ENCODE measurements at regions of chr10 and their contacts with region 1.

Region 1: DNA sequence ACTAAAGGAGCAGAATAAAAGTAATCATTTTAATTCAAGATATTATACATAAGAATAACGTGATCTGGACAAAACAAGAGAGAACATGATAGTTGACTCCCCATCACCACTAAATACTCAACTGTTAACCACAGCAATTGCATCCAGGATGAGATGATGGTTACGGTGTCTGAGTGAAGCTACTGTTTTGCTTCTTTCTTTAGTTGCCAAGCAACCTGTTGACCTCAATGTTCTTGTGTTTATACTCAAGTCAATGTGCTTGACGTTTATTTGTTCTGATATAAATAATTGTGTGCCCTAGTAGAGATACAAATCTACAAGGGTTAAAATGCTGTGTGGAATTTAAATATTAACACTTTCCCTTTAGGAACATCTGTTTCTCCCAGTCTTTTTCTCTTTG is 31.4 kb upstream of the MPP7 start:
- DNase-seq: peak in 8 of 9 donors; percentile 32 to 95 (median 91)
- ATAC-seq: peak; percentile 83
- H3K4me3 ChIP-seq: peak overlapping the region; percentile 62
- H3K4me3 Mint-ChIP-seq: peak overlapping the region; percentile 72 to 97 (median 91)
- H3K27ac ChIP-seq: peak overlapping the region; percentile 98
- H3K27ac Mint-ChIP-seq: peak overlapping the region; percentile 96 to 100 (median 99)
- H3K4me1 ChIP-seq: peaks cover 33 to 56% of the 10 kb centered on the region in 2 donors
- H3K4me1 Mint-ChIP-seq: peaks cover 44 to 88% (median 71%) of the 10 kb centered on the region in 7 donors
- H3K27me3 ChIP-seq: no peaks in the 10 kb centered on the region
- H3K27me3 Mint-ChIP-seq: peaks cover 0 to 9% (median 0%) of the 10 kb centered on the region in 5 donors

Region 2: DNA sequence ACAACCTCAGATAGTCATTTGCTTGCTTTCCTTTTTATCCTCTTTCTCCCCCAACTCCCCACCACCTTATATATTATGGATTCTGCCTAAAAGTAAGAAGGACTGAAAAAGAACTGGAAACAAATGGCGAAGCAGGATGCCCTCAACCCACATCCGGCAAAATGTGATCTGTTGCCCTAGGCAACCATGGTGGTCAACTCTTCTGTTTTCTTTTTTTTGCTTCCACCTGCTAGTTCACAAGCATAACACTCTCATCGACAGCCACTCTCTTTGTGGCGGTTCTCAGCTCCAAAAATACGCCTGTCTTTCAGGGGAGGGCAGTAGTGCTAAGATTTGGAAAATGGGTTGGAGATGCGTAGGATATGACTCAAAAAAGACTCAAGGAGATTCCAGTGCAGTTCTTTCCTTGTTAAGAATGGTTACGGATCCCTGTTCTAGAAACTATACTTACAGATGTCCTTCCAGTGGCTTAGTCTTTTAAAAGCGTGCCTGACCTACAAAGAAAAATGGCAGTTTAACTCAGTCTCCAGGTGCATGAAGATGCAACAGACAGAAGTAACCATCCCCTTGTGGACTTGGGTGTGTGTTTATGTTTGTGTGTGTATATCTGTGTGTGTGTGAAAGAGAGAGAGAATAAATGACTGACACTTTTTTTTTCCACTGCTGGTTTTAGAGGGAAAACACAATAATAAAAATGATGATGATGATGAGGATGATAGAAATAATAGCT is 1885.4 kb before region 1 on chr10:
- CTCF ChIA-PET with region 1: no interaction called
- POLR2A ChIA-PET with region 1: interaction called, 3 read pairs
- intact Hi-C with region 1: loop called in 1 of 2 experiments (anchors 10 kb)
- DNase-seq: peak; percentile 23 to 91 (median 89)
- ATAC-seq: peak; percentile 89
- H3K4me3 ChIP-seq: peak overlapping the region; percentile 31
- H3K4me3 Mint-ChIP-seq: peak overlapping the region; percentile 71 to 92 (median 84)
- H3K27ac ChIP-seq: peak overlapping the region; percentile 76
- H3K27ac Mint-ChIP-seq: peak overlapping the region; percentile 93 to 99 (median 97)
- H3K4me1 ChIP-seq: peaks cover 57 to 70% of the 10 kb centered on the region in 2 donors
- H3K4me1 Mint-ChIP-seq: peaks cover 60 to 97% (median 90%) of the 10 kb centered on the region in 7 donors
- H3K27me3 ChIP-seq: no peaks in the 10 kb centered on the region
- H3K27me3 Mint-ChIP-seq: no peaks in the 10 kb centered on the region

Region 3: GRCh38 chr10:26682931-26683330 is 1651.4 kb before region 1 on chr10:
- CTCF ChIA-PET with region 1: interaction called, 3 read pairs
- POLR2A ChIA-PET with region 1: no interaction called
- intact Hi-C with region 1: loop called in 1 of 2 experiments (anchors 10 kb)
- DNase-seq: peak in 7 of 9 donors; percentile 65 to 91 (median 85)
- ATAC-seq: peak; percentile 91
- H3K4me3 ChIP-seq: no peak overlapping the region
- H3K4me3 Mint-ChIP-seq: peak overlapping the region in 9 of 10 donors; percentile 26 to 83 (median 71)
- H3K27ac ChIP-seq: peak overlapping the region; percentile 69
- H3K27ac Mint-ChIP-seq: peak overlapping the region in 8 of 9 donors; percentile 94 to 99 (median 97)
- H3K4me1 ChIP-seq: peaks cover 0 to 33% of the 10 kb centered on the region in 2 donors
- H3K4me1 Mint-ChIP-seq: peaks cover 14 to 63% (median 39%) of the 10 kb centered on the region in 7 donors
- H3K27me3 ChIP-seq: no peaks in the 10 kb centered on the region
- H3K27me3 Mint-ChIP-seq: peaks cover 0 to 9% (median 0%) of the 10 kb centered on the region in 5 donors

Region 4: DNA sequence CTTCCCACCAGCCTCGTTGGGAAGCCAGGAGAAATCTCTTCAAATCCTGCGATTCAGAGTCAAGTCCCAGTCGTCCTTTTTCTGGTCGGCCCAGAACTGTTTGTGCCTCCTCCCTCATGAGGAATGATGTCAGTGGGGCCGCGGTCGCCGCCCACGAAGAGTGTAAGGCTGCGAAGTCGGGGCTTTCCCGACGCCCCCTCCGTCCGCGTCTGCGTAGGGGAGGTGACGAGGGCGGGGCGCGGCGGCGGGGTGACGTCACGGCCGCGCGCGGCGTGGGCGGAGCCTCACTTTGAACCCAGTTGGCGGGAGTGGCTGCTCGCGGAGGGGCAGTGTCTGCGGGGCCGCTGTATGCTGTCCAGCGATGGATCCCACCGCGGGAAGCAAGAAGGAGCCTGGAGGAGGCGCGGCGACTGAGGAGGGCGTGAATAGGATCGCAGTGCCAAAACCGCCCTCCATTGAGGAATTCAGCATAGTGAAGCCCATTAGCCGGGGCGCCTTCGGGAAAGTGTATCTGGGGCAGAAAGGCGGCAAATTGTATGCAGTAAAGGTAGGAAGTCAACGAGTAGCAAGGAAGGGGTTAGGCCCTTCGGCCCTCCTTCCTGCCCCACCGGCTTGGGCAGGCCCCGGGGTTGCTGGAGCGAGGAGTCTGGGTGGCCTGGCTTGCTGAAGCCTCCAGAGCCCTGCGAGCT is 1179.1 kb before region 1 on chr10 and contains the start of gene MASTL:
- CTCF ChIA-PET with region 1: no interaction called
- POLR2A ChIA-PET with region 1: no interaction called
- intact Hi-C with region 1: loop called in 1 of 2 experiments (anchors 1 kb)
- DNase-seq: peak; percentile 93 to 97 (median 96)
- ATAC-seq: peak; percentile 89
- H3K4me3 ChIP-seq: peak within 1 kb of the TSS; percentile 90
- H3K4me3 Mint-ChIP-seq: peak within 1 kb of the TSS; percentile 91 to 100 (median 99)
- H3K27ac ChIP-seq: peak within 1 kb of the TSS; percentile 99
- H3K27ac Mint-ChIP-seq: peak within 1 kb of the TSS; percentile 100
- H3K4me1 ChIP-seq: peaks cover 13 to 17% of the 10 kb centered on the region in 2 donors
- H3K4me1 Mint-ChIP-seq: peaks cover 34 to 60% (median 50%) of the 10 kb centered on the region in 7 donors
- H3K27me3 ChIP-seq: no peaks in the 10 kb centered on the region
- H3K27me3 Mint-ChIP-seq: peaks cover 0 to 2% (median 0%) of the 10 kb centered on the region in 5 donors
- total RNA-seq, gene MASTL: 8.4 to 29.0 (median 20.2) TPM

Region 5: GRCh38 chr10:27661514-27662286 is 672.6 kb before region 1 on chr10:
- CTCF ChIA-PET with region 1: no interaction called
- POLR2A ChIA-PET with region 1: no interaction called
- intact Hi-C with region 1: no loop called
- DNase-seq: no peak
- ATAC-seq: no peak
- H3K4me3 ChIP-seq: no peak overlapping the region
- H3K4me3 Mint-ChIP-seq: no peak overlapping the region
- H3K27ac ChIP-seq: no peak overlapping the region
- H3K27ac Mint-ChIP-seq: no peak overlapping the region
- H3K4me1 ChIP-seq: no peaks in the 10 kb centered on the region
- H3K4me1 Mint-ChIP-seq: peaks cover 0 to 7% (median 0%) of the 10 kb centered on the region in 7 donors
- H3K27me3 ChIP-seq: peaks cover 0 to 4% of the 10 kb centered on the region in 2 donors
- H3K27me3 Mint-ChIP-seq: peaks cover 31 to 53% (median 39%) of the 10 kb centered on the region in 5 donors

Region 6: DNA sequence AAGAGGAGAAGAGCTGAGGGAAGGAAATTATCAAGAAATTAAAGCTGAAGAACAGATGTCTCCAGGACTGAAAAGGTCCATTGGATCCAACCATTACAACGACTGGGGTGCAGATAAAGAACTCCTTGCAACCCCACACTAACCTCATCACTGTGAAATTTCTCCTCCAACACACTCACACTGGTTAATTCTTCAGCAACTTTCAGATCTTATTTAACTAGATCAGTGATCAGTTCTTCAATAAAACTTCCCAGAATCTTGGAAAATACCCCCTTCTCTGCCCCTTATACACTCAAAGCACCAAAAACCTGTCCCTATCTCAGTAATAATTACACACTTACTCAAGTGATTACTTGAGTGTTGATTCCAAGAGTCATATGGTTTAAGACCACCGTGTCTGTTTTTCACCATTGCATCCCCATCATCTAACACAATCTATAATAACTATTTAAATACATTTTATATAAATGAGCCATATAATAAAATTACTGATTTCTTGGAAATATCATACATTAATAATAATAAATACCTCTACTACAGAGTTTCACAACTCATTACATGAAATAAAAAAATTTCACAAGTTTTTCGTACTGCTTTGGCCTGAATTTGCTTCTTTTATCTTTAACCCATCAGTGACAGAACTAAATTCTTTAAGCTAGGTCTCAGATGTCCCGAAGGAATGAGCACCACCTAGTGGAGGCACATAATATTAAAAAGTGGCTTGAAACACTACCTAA is 155.1 kb before region 1 on chr10:
- CTCF ChIA-PET with region 1: interaction called, 3 read pairs
- POLR2A ChIA-PET with region 1: no interaction called
- intact Hi-C with region 1: loop called in 1 of 2 experiments (anchors 2 kb)
- DNase-seq: peak in 7 of 9 donors; percentile 18 to 63 (median 49)
- ATAC-seq: peak; percentile 86
- H3K4me3 ChIP-seq: peak overlapping the region; percentile 55
- H3K4me3 Mint-ChIP-seq: peak overlapping the region; percentile 0 to 98 (median 87)
- H3K27ac ChIP-seq: peak overlapping the region; percentile 54
- H3K27ac Mint-ChIP-seq: peak overlapping the region; percentile 77 to 98 (median 92)
- H3K4me1 ChIP-seq: peaks cover 10 to 12% of the 10 kb centered on the region in 2 donors
- H3K4me1 Mint-ChIP-seq: peaks cover 17 to 70% (median 55%) of the 10 kb centered on the region in 7 donors
- H3K27me3 ChIP-seq: no peaks in the 10 kb centered on the region
- H3K27me3 Mint-ChIP-seq: peaks cover 0 to 9% (median 0%) of the 10 kb centered on the region in 5 donors

Region 7: DNA sequence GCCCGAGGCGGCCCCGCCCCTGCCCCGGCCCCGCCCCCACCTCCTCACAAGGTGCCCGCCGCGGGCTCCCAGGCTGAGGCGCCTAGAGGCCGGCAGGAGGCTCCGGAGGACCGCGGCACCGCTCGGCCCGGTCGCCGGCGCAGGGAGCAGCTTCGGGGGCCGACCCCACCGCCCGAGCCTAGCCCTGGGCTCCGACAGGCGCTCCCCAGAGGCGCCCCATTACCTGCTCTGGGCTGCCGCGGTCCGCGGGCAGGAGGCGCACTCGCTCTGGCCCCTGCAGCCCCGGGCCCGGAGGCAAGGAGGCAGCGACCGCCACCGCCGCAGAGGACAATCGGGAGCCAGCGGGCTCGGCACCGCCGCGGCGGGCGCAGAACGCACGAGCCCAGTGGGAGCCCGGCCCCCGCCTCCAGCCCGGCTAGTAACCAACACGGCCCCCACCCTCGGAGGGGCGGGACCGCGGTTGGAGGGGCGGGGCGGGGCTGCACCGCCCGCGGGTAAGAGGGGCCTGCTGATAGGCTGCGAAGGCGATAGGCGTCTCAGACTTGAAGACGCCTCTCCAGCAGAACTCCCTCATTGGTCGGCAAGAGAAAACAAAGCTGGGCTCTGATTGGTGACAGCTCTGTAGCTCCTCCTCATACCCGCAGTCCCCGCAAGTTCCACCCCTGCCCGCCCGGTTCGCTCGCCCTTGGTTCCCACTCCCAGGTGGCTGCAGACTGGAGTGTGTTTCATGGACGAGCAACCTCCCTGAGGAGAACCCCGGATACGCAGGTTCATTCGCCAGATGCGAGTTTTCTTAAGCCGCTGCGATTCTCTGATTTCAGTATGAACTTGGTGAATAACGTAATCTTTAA is 31.4 kb before region 1 on chr10 and contains the start of gene MPP7:
- CTCF ChIA-PET with region 1: interaction called, 73 read pairs
- POLR2A ChIA-PET with region 1: interaction called, 390 read pairs
- intact Hi-C with region 1: loop called (anchors 1 kb)
- DNase-seq: peak; percentile 96 to 98 (median 97)
- ATAC-seq: peak; percentile 97
- H3K4me3 ChIP-seq: peak within 1 kb of the TSS; percentile 92
- H3K4me3 Mint-ChIP-seq: peak within 1 kb of the TSS; percentile 85 to 99 (median 93)
- H3K27ac ChIP-seq: peak within 1 kb of the TSS; percentile 86
- H3K27ac Mint-ChIP-seq: peak within 1 kb of the TSS; percentile 67 to 98 (median 94)
- H3K4me1 ChIP-seq: peaks cover 8 to 42% of the 10 kb centered on the region in 2 donors
- H3K4me1 Mint-ChIP-seq: peaks cover 27 to 80% (median 67%) of the 10 kb centered on the region in 7 donors
- H3K27me3 ChIP-seq: no peaks in the 10 kb centered on the region
- H3K27me3 Mint-ChIP-seq: peaks cover 0 to 51% (median 0%) of the 10 kb centered on the region in 5 donors
- total RNA-seq, gene MPP7: 9.7 to 44.7 (median 36.1) TPM

Region 8: DNA sequence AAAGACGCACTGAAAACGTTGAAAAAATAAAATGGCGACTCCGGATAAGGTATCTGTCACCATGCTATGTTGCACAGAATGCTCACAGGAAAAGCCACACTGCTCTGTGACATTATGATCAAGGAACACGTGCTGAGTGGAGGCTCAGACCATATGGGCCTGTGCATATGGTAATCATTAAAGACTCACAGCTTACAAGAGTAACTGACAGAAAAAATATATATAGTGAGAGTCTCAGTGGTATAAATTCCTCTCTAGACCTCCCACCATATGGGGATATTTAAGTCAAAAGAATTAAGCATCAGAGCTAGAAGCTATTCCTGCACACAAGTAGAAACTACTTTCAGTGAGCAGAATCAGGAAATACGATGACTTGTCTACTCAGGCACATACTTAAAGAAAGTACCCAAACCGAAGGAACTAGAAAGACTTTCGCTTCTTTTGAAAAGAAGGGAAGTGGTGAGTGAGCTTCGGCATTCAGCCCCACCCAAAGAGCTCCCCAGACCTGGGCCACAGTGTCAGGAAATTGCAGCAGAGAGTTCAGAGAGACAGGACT is 33.7 kb after region 1 on chr10:
- CTCF ChIA-PET with region 1: interaction called, 46 read pairs
- POLR2A ChIA-PET with region 1: interaction called, 165 read pairs
- intact Hi-C with region 1: loop called (anchors 1 kb)
- DNase-seq: peak in 8 of 9 donors; percentile 54 to 88 (median 83)
- ATAC-seq: peak; percentile 97
- H3K4me3 ChIP-seq: peak overlapping the region; percentile 18
- H3K4me3 Mint-ChIP-seq: peak overlapping the region; percentile 63 to 93 (median 76)
- H3K27ac ChIP-seq: peak overlapping the region; percentile 78
- H3K27ac Mint-ChIP-seq: peak overlapping the region; percentile 90 to 99 (median 96)
- H3K4me1 ChIP-seq: peaks cover 44 to 54% of the 10 kb centered on the region in 2 donors
- H3K4me1 Mint-ChIP-seq: peaks cover 39 to 80% (median 60%) of the 10 kb centered on the region in 7 donors
- H3K27me3 ChIP-seq: no peaks in the 10 kb centered on the region
- H3K27me3 Mint-ChIP-seq: peaks cover 0 to 5% (median 0%) of the 10 kb centered on the region in 5 donors